ENCODE measurements at regions of chr17 and their contacts with region 1.

Region 1: GRCh38 chr17:14300575-14301278 is at the start of gene HS3ST3B1:
- DNase-seq: peak; percentile 98
- ATAC-seq: peak; percentile 93
- total RNA-seq, gene HS3ST3B1: 1.7 TPM

Region 2: DNA sequence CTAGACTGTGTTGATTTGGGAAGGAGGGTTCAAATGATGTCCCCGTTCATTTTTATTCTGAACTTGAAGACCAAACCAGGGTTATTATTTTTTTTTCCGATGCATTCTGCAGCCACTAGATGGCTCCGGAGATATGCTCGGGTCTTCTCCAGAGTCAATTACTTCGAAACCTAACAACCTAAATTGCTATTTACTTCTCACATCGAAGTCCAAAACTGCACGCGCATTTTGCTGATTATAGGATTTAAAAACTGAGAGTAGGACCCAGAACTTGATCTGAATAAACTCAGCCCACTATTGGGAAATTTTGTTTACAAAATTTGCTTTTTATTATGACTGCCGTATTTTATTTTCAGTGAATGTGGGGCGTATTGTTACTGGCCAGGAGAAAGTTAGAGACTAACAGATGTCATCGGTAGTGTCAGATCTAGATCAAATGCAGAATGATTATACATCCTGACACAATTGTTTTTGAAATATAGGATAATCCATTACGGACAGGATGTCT is 962.8 kb before region 1 on chr17:
- intact Hi-C with region 1: loop called (anchors 5 kb)
- DNase-seq: no peak
- ATAC-seq: peak; percentile 66

Region 3: DNA sequence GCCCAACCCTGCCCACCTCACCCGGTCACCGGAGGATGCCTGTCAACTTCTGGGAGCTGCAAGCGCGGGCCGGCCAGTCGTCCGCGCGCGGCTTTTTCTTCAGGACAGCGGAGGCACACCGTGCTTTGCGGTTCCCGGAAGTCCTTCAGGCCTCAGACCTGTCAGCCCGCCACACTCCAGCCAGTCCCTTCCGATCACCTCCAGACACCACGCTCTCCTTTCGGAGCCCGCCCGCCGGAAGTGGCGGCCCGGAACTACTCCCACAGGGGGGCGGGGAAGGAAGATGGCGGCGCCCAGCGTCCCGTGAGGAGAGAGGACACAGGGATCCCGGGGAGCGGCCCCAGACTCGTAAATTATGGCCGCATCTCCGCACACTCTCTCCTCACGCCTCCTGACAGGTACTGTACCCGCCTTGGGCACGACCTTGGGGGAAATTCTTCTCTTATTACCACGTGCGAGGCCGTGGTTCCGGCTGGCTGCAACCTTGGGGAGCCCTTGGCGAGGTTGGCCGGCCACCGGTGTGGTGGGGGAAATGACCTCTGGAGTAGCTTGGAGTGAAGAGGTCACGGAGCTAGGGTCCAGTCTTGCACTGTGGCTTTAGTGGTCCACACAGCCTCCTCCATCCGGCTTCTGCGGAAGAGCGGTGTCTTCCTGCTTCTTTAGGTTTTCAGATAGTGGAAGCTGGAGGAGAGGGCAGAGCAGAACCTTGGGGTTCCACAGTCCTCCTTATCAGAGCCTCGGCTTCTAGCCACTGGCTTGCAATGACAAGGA is 231.3 kb before region 1 on chr17 and contains the start of gene COX10:
- intact Hi-C with region 1: loop called (anchors 10 kb)
- DNase-seq: peak; percentile 93
- ATAC-seq: peak; percentile 100
- total RNA-seq, gene COX10: 50.6 TPM

Region 4: DNA sequence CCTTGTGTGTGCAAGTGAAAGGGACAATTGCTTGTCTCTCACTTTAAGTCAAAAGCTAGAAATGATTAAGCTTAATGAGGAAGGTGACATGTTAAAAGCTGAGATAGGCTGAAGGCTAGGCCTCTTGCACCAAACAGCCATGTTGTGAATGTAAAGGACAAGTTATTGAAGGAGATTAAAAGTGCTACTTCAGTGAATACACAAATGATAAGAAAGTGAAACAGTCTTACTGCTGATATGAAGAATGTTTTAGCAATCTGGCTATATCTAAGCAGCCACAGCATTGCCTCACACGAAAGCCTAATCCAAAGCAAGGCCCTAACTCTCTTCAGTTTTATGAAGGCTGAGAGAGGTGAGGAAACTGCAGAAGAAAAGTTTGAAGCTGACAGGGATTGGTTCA is 135.1 kb before region 1 on chr17:
- intact Hi-C with region 1: no loop called
- DNase-seq: no peak
- ATAC-seq: no peak

Region 5: DNA sequence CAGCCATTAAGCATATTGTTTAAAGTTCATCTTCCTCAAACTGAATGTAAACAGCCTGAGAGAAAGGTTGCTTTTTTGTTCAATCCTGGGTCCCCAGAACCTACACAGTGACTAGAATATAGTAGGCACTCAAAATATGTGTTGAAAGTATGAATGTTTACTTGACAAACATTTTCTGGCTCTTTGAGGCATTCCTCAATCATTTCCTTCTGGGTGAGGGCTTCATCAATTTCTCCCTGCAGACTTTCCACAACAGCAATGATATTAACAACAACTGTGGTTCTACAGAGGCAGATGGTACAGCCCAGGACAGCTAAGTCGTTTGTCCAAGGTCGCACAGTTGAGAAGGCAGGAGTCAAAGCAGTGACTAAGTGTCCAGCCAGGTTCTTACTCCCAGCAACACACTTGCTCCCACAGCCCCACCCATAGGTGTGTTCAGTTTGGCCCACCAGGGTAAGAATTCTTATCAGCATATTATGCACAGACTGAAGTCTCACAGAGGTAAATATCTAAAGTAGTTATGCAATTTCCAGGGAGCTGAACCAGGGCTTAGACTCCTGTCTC is 61.3 kb after region 1 on chr17:
- intact Hi-C with region 1: no loop called
- DNase-seq: no peak
- ATAC-seq: no peak

Region 6: GRCh38 chr17:14389681-14390080 is 89.0 kb after region 1 on chr17:
- intact Hi-C with region 1: no loop called
- DNase-seq: no peak
- ATAC-seq: no peak

Measured in left ventricle myocardium superior (tissue), 1 donor.